ENCODE measurements at regions of chr4 and their contacts with region 1.

Region 1: DNA sequence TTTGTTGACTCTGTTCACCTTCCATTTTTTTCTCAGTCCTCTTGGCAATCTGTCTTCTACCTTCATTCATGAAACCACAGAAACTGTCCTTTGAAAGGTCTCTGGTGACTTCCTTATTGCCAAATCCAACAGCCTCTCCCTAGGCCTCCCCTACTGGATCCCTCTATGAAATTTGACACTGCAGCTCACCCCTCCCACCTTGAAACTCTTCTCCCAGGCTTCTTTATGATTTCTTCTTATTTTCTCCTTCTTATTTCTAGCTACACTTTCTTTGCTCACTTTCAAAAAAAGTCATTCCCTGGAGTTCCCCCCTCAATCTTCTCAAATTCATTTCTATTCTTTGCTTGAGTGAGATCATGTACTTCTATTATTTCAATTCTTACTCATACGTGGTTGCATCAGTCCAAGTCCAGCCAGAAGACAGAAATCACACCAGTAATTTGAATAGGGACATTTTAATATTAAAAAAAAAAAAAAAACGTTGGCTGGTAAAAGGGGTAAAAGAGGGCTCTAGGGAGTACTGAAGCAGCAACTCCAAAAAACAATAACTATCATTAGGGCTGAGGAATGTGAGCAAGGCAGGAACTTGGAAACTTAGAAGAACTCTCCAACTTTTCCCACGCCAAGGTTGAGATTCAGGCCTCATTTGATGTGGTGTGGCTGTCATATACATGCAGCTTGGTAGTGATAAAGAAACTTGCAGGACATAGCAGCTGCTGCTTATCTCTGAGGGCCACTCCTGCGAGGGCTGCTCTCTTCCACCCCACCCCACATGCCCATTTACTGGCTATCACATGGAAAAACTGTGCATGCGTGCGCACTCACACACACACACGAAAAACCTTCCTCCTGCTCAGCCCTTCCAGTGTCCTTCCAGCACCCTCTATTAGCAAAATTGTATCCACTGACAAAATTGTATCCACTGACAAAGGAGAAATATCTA is 169.8 kb upstream of the GALNT7 start:
- DNase-seq: no peak
- H3K4me3 ChIP-seq: no peak overlapping the region
- H3K27ac ChIP-seq: peak overlapping the region; percentile 76 to 83
- H3K4me1 ChIP-seq: peaks cover 3 to 19% of the 10 kb centered on the region in 2 donors
- H3K27me3 ChIP-seq: no peaks in the 10 kb centered on the region
- CTCF ChIP-seq: no peak

Region 2: GRCh38 chr4:172962564-172963353 is 36.0 kb before region 1 on chr4:
- intact Hi-C with region 1: loop called (anchors 5 kb)
- DNase-seq: peak in 1 of 2 donors; percentile 81
- H3K4me3 ChIP-seq: peak overlapping the region; percentile 30 to 51
- H3K27ac ChIP-seq: peak overlapping the region; percentile 81 to 88
- H3K4me1 ChIP-seq: peaks cover 0 to 18% of the 10 kb centered on the region in 2 donors
- H3K27me3 ChIP-seq: no peaks in the 10 kb centered on the region
- CTCF ChIP-seq: no peak

Region 3: DNA sequence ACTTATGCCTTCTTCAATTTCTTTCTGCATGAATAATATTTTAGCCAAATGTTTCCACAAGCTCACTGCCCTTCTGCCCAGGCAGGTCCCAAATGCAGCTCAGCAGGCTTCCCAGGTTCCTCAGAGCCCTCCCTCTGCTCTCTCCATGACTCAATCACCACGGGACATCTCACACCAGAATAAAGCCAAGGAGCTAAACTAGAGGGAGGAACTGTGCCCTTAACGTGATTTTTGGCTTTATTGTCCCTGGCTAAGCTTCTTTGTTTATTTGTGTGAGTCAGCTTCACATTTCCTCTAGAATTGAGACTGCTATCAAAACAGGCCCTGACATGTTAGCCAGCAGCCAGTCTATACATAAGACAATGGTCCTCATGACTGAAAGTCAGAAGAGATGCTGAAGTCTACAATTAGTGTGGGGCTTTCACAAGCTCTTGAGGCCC is 16.6 kb before region 1 on chr4:
- intact Hi-C with region 1: loop called (anchors 2 kb)
- DNase-seq: peak; percentile 36 to 86
- H3K4me3 ChIP-seq: no peak overlapping the region
- H3K27ac ChIP-seq: peak overlapping the region; percentile 72 to 85
- H3K4me1 ChIP-seq: peaks cover 0 to 6% of the 10 kb centered on the region in 2 donors
- H3K27me3 ChIP-seq: no peaks in the 10 kb centered on the region
- CTCF ChIP-seq: no peak

Measured in ascending aorta (tissue), 2 donors.